Endothelial cell of umbilical vein (primary cell): ENCODE measurements at regions of chr14 and their contacts with region 1.

Region 1: DNA sequence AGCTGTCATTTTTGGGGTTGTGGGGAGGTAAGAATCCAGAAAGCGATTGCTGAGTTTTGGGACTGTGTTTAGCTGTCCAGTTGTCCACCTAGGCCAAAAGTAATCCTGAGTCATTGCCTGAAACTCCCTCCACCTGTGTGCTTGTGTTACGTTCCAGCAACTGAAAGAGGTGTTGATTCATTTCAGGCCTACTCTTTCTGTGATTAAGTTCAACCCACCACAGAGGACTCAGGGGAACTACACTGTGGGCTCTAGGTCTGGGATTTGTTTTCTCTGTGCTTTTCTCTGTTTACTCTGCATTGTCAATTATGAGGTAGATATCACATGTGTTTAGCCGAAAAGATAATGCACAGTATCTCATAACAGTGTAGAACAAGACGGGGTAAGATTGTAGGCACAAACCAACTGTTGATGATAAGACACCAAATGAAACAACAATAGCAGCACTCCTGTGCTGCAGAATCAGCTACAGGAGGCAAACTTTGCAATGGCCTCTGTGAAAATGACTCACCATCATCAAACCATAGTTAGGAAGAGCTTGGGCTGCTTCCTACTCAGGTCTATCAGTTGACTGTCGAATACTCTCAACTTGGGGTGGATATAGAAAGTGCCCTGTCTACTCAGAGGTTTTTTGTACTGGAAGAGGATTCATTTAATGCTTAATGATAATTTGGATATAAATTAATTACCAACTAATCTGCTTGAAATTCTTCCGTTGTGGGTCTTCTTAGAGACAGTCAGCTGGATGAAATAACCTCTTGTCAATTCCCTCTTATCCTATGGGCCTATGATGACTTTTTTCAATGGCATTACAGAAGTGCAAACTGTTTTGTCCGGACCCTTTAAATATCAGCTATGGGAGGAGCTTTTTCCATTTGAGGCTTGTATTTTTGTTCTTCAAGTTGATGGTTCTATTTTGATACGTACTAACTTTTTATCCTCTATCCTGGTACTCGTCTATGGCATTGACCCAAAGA is 385.9 kb downstream of the BMP4 start:
- DNase-seq: no peak
- H3K4me3 ChIP-seq: no peak overlapping the region
- H3K27ac ChIP-seq: no peak overlapping the region
- H3K4me1 ChIP-seq: no peaks in the 10 kb centered on the region
- H3K27me3 ChIP-seq: peaks cover 0 to 3% of the 10 kb centered on the region in 2 experiments
- CTCF ChIP-seq: no peak
- POLR2A ChIP-seq: no peak

Region 2: DNA sequence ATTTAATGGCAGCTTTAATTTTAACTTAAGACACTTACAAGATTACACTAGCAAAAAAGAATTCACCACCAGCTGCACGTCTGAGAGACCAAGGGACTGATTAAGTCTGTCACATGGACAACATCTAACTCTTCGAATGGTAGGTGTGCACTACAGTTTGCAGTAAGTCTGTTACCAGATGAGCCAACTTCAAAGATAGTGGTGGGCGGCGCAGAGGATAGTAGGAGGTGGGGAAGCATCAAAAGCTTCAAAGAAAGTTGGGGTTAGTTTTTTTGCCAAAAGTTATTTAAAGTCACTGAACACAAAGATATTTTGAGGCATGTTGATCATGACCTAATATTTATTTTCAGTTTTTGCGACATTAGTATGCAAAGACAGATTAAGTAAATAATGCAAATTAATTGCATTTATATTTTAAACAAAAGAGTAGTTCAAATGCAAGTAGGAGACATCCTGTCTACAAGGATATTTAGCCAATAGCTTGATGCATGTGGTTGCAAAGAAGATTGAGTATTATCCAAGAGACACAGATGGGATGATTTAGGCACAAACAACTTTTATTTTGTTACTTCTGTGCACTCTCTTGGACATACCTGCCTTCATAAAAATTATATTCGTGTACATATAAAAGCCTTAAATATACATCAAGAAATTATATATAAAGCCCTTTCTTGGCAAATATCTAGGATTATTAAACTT is 58.2 kb after region 1 on chr14:
- CTCF ChIA-PET with region 1: no interaction called
- POLR2A ChIA-PET with region 1: no interaction called
- dilution Hi-C with region 1: no loop called
- intact Hi-C with region 1: loop called (anchors 5 kb)
- DNase-seq: no peak
- H3K4me3 ChIP-seq: no peak overlapping the region
- H3K27ac ChIP-seq: no peak overlapping the region
- H3K4me1 ChIP-seq: no peaks in the 10 kb centered on the region
- H3K27me3 ChIP-seq: peaks cover 0 to 9% of the 10 kb centered on the region in 2 experiments
- CTCF ChIP-seq: no peak
- POLR2A ChIP-seq: no peak

Region 3: DNA sequence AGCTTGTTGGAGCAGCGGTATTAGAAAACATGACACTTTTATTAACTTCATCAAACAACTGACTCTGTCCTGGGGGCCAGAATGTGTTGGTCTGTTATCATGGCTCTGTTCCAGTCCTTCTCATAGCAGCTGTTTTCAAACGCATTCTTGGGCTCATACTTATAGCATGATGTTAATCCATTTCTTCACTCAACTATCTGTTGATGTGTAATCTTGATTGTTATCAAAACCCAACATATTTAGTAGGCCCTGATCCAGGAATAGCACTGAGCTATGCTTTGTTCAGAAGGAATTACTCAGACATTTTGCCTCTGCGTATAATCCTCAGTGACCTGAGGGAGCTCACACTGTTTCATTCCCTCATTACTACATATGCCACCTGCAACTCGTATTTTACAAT is 70.0 kb after region 1 on chr14:
- CTCF ChIA-PET with region 1: no interaction called
- POLR2A ChIA-PET with region 1: no interaction called
- dilution Hi-C with region 1: no loop called
- intact Hi-C with region 1: no loop called
- DNase-seq: peak; percentile 13
- H3K4me3 ChIP-seq: no peak overlapping the region
- H3K27ac ChIP-seq: no peak overlapping the region
- H3K4me1 ChIP-seq: no peaks in the 10 kb centered on the region
- H3K27me3 ChIP-seq: peaks cover 9% of the 10 kb centered on the region in 2 experiments
- CTCF ChIP-seq: no peak
- POLR2A ChIP-seq: no peak